ENCODE measurements at regions of chr6 and their contacts with region 1.

Region 1: DNA sequence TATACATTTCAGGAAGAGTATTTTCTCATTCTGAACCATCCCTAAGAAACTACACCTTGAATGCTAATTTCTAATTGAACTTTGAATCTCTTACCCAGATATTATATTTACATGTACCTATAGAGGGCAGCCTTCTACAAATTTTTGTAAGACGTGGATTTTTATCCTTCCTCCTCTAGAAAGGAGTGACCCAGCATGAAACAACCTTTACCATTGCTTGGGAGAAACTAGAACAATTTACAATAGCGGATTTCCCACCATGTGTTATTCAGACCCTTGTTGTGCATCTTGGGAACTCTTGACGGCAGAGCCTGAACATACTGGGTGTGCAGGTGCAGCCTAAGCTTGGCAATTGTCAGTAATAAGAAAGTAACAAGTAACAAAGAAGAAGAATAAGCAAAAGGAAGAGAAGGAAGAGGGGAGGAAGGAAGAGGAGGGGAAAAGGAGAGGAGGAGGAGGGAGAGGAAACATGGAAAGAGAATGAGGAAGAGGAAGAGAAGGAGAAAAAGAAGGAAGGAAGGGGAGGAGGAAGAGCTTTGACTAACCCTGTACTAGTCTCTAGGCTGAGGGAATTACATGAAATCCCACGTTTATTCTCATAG is 10.8 kb upstream of the TAAR1 start:
- DNase-seq: peak; percentile 15 to 40
- ATAC-seq: peak; percentile 73 to 83
- H3K4me3 ChIP-seq: no peak overlapping the region
- H3K27ac ChIP-seq: no peak overlapping the region; a peak in 1 of 6 replicates
- H3K4me1 ChIP-seq: no peaks in the 10 kb centered on the region
- CTCF ChIP-seq: peak; percentile 63
- EP300 ChIP-seq: no peak
- POLR2A ChIP-seq: no peak
- RAD21 ChIP-seq: peak; percentile 72 to 78

Region 2: DNA sequence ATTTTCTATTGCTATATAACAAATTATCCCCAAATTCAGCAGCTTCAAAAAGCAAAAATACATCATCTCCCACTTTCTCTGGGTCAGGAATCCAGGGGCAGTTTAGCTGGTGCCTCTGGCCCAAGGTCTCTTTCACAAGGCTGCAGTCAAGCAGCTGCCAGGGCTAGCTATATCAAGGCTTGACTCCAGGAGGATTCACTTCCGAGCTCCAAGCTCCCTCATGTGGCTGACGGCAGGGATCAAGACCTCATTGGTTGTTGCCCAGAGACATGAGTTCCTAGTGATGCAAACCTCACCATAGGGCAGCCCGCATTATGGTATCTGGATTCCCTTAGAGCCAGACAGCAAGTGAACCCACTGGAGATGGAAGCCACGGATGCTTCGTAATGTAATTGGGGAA is 45.4 kb after region 1 on chr6:
- CTCF ChIA-PET with region 1: interaction called, 17 read pairs
- POLR2A ChIA-PET with region 1: interaction called, 6 read pairs
- DNase-seq: peak; percentile 57 to 77
- ATAC-seq: peak; percentile 99
- H3K4me3 ChIP-seq: no peak overlapping the region
- H3K27ac ChIP-seq: no peak overlapping the region
- H3K4me1 ChIP-seq: peaks cover 20% of the 10 kb centered on the region; the same call in 2 of the 3 replicates
- CTCF ChIP-seq: peak; percentile 43
- EP300 ChIP-seq: no peak
- POLR2A ChIP-seq: no peak
- RAD21 ChIP-seq: peak; percentile 66 to 73

Region 3: DNA sequence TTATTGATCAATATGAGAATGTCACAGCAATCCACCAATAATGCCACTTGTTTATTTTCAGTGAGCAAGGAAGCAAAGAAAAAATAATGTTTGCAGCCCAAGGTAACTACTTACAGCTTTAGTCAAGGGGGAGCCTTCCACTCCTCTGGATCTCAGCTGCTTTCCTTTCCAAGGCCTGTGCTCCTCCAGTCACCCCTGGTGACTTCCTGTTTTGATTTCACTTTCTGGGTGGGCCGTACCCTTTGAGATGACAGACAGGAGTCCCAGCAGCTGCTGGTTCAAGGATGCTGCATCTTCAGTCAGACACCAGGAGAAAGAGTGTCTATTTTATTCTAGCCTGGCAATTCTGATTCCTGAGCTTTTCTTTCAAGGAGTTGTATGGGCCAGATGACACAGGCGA is 93.5 kb after region 1 on chr6:
- CTCF ChIA-PET with region 1: interaction called, 13 read pairs
- POLR2A ChIA-PET with region 1: no interaction called
- DNase-seq: no peak
- ATAC-seq: no peak
- H3K4me3 ChIP-seq: no peak overlapping the region
- H3K27ac ChIP-seq: no peak overlapping the region
- H3K4me1 ChIP-seq: peaks cover 16% of the 10 kb centered on the region
- CTCF ChIP-seq: no peak
- EP300 ChIP-seq: no peak
- POLR2A ChIP-seq: no peak
- RAD21 ChIP-seq: no peak

Region 4: DNA sequence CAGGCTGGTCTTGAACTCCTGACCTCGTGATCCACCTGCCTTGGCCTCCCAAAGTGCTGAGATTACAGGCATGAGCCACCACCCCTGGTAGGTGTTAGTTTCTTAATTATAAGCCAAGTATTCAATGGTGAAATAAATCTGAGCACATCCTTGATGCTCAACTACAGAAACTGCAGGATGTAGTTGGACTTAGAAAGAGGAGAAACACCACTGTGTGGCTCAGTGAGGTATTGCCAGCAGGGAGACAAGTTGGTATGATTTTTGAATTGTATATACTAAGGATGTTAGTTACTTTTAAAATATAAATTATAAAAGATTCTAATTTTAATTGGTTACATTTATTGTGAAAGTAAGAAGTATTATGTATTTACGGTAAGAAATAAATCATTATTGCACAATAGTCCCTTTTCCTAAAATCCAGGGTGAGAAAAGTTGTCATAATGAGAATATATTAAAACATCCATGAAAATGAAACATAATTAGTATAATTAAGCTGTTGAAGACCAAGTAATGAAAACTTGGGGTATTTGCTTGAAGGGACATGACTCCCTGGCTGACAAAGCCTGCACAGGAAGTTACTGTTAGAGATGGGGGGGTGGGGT is 111.1 kb after region 1 on chr6:
- CTCF ChIA-PET with region 1: interaction called, 22 read pairs
- POLR2A ChIA-PET with region 1: no interaction called
- DNase-seq: peak in 1 of 2 experiments; percentile 22
- ATAC-seq: 0 out of 6 replicates have a peak, but pooled peaks of 1 of the 2 experiments have one; percentile 56
- H3K4me3 ChIP-seq: no peak overlapping the region
- H3K27ac ChIP-seq: no peak overlapping the region
- H3K4me1 ChIP-seq: no peaks in the 10 kb centered on the region
- CTCF ChIP-seq: no peak; the same call in 2 of the 3 replicates
- EP300 ChIP-seq: no peak
- POLR2A ChIP-seq: no peak
- RAD21 ChIP-seq: peak; percentile 18 to 33; a peak in 3 of 5 replicates

Region 5: GRCh38 chr6:132798869-132799538 is 129.2 kb after region 1 on chr6:
- CTCF ChIA-PET with region 1: interaction called, 26 read pairs
- POLR2A ChIA-PET with region 1: no interaction called
- DNase-seq: peak in 1 of 2 experiments; percentile 76
- ATAC-seq: peak in 1 of 2 experiments; percentile 91; a peak in 4 of 6 replicates
- H3K4me3 ChIP-seq: peak overlapping the region; percentile 73
- H3K27ac ChIP-seq: peak overlapping the region in 1 of 2 experiments; percentile 80; a peak in 4 of 6 replicates
- H3K4me1 ChIP-seq: no peaks in the 10 kb centered on the region
- CTCF ChIP-seq: peak; percentile 70
- EP300 ChIP-seq: no peak
- POLR2A ChIP-seq: no peak
- RAD21 ChIP-seq: peak; percentile 39 to 49

Region 6: DNA sequence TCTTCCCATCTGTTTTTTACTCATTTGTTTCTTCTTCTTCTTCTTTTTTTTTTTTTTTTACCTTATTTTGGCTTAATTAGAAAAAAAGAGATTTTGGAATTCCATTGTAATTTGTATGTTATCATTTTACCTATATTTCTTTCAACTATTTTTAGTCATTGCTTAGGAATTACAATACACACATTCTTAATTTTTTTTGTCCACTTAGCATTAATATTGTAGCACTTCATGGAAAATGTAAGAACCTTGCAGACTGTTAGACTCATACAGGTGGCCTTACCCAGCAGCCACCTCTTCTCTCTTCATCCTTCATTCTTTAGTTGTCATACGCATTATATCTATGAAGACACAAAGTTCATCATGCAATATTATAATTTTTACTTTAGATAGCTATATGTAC is 134.5 kb after region 1 on chr6:
- CTCF ChIA-PET with region 1: interaction called, 26 read pairs
- POLR2A ChIA-PET with region 1: no interaction called
- DNase-seq: no peak
- ATAC-seq: no peak
- H3K4me3 ChIP-seq: no peak overlapping the region
- H3K27ac ChIP-seq: no peak overlapping the region
- H3K4me1 ChIP-seq: no peaks in the 10 kb centered on the region
- CTCF ChIP-seq: no peak
- EP300 ChIP-seq: no peak
- POLR2A ChIP-seq: no peak
- RAD21 ChIP-seq: no peak